Activated CD8-positive, alpha-beta T cell treated with anti-CD3 and anti-CD28 coated beads for 36 hours (primary cell): ENCODE measurements at regions of chr18 and their contacts with region 1.

Region 1: DNA sequence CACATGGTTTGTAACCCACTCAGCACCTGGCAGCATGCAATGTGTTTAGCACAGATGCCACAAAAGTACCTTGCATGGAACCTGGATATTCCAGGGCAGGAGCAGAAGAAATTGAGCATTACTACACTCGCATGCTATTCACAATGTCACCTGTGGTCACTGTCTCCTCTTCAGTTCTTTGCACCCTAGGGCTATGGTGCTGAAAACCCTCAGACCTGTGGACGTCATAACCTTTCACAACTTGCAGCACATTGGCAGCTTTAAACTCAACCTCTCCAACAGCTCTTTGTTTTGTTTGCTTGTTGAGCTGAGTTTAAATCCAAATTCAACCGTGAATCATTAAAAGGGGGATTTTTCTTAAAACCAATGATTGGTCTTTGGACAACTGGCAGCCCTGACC is 344.0 kb upstream of the ZNF521 start:
- DNase-seq: no peak
- ATAC-seq: no peak
- H3K4me3 Mint-ChIP-seq: no peak overlapping the region
- H3K27ac Mint-ChIP-seq: no peak overlapping the region
- H3K4me1 Mint-ChIP-seq: no peaks in the 10 kb centered on the region
- H3K27me3 Mint-ChIP-seq: peaks cover 2% of the 10 kb centered on the region
- CTCF ChIP-seq: no peak

Region 2: GRCh38 chr18:24974431-24974830 is 721.5 kb before region 1 on chr18:
- CTCF ChIA-PET with region 1: no interaction called
- POLR2A ChIA-PET with region 1: no interaction called
- intact Hi-C with region 1: loop called (anchors 10 kb)
- DNase-seq: no peak
- ATAC-seq: no peak
- H3K4me3 Mint-ChIP-seq: no peak overlapping the region
- H3K27ac Mint-ChIP-seq: no peak overlapping the region
- H3K4me1 Mint-ChIP-seq: no peaks in the 10 kb centered on the region
- H3K27me3 Mint-ChIP-seq: no peaks in the 10 kb centered on the region
- CTCF ChIP-seq: no peak